AG04449 (cell line): ENCODE measurements at regions of chr12 and their contacts with region 1.

Region 1: GRCh38 chr12:116434155-116435011 is 124.8 kb upstream of the MAP1LC3B2 start:
- DNase-seq: peak; percentile 67
- H3K4me3 ChIP-seq: peak overlapping the region; percentile 57
- CTCF ChIP-seq: no peak

Region 2: GRCh38 chr12:116455540-116456329 is 21.4 kb after region 1 on chr12:
- CTCF ChIA-PET with region 1: no interaction called
- POLR2A ChIA-PET with region 1: interaction called, 10 read pairs
- DNase-seq: peak; percentile 73
- H3K4me3 ChIP-seq: peak overlapping the region; percentile 23
- CTCF ChIP-seq: no peak